ENCODE measurements at regions of chr19 and their contacts with region 1.

Region 1: DNA sequence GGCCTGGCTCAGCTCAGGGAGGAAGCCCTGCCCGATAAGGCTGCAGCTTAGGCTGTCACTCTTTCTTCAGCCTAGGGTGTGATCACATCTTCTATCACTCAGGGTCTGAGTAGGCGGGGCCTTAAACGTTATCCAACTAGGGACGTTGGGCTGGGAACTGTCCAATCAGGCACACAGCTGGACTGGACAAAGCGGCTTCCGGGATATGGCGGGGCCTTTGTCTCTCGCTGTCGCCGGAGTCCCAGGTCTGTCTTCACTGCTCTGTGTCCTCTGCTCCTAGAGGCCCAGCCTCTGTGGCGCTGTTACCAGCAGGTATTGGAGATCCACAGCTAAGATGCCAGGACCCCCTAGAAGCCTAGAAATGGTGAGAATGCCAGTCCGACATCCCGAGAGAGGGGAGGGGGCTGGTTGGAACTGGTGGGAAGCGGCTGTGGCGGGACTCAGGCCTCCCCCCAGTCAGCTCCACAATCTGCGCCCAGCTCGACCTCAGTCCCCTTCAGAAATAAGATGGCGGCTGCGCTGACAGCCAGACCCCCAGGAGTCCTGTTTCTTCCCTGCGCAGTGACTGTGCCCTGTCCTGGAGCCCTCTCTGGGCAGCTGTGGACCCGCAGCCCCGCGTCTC is at the start of gene ZNF254:
- DNase-seq: peak; percentile 43 to 91 (median 64)
- ATAC-seq: peak; percentile 98
- H3K4me3 ChIP-seq: peak within 1 kb of the TSS; percentile 63
- H3K4me3 Mint-ChIP-seq: peak within 1 kb of the TSS; percentile 92
- H3K27ac ChIP-seq: peak within 1 kb of the TSS; percentile 38 to 61
- H3K27ac Mint-ChIP-seq: peak within 1 kb of the TSS; percentile 87
- H3K4me1 ChIP-seq: peaks cover 10% of the 10 kb centered on the region
- H3K4me1 Mint-ChIP-seq: peaks cover 16% of the 10 kb centered on the region
- H3K27me3 ChIP-seq: no peaks in the 10 kb centered on the region
- H3K27me3 Mint-ChIP-seq: no peaks in the 10 kb centered on the region
- CTCF ChIP-seq: no peak
- total RNA-seq, gene ZNF254: 13.4 to 14.0 TPM

Region 2: GRCh38 chr19:24033301-24033962 is 53.7 kb before region 1 on chr19:
- CTCF ChIA-PET with region 1: interaction called, 3 read pairs
- POLR2A ChIA-PET with region 1: interaction called, 55 read pairs
- intact Hi-C with region 1: loop called (anchors 5 to 10 kb)
- DNase-seq: peak; percentile 65 to 92 (median 77)
- ATAC-seq: peak; percentile 99
- H3K4me3 ChIP-seq: peak overlapping the region; percentile 99
- H3K4me3 Mint-ChIP-seq: peak overlapping the region; percentile 100
- H3K27ac ChIP-seq: peak overlapping the region; percentile 66 to 85
- H3K27ac Mint-ChIP-seq: peak overlapping the region; percentile 94
- H3K4me1 ChIP-seq: peaks cover 51% of the 10 kb centered on the region
- H3K4me1 Mint-ChIP-seq: peaks cover 47% of the 10 kb centered on the region
- H3K27me3 ChIP-seq: no peaks in the 10 kb centered on the region
- H3K27me3 Mint-ChIP-seq: no peaks in the 10 kb centered on the region
- CTCF ChIP-seq: no peak

Region 3: GRCh38 chr19:24048261-24048660 is 38.8 kb before region 1 on chr19:
- CTCF ChIA-PET with region 1: no interaction called
- POLR2A ChIA-PET with region 1: no interaction called
- intact Hi-C with region 1: no loop called
- DNase-seq: no peak
- ATAC-seq: no peak
- H3K4me3 ChIP-seq: no peak overlapping the region
- H3K4me3 Mint-ChIP-seq: no peak overlapping the region
- H3K27ac ChIP-seq: no peak overlapping the region
- H3K27ac Mint-ChIP-seq: no peak overlapping the region
- H3K4me1 ChIP-seq: no peaks in the 10 kb centered on the region
- H3K4me1 Mint-ChIP-seq: peaks cover 5% of the 10 kb centered on the region
- H3K27me3 ChIP-seq: no peaks in the 10 kb centered on the region
- H3K27me3 Mint-ChIP-seq: no peaks in the 10 kb centered on the region
- CTCF ChIP-seq: no peak